Activated CD4-positive, alpha-beta memory T cell treated with anti-CD3 and anti-CD28 coated beads for 36 hours (primary cell): ENCODE measurements at regions of chr3 and their contacts with region 1.

Region 1: GRCh38 chr3:88203642-88204055 is 53.9 kb downstream of the C3orf38 start:
- DNase-seq: peak; percentile 72
- H3K4me3 Mint-ChIP-seq: no peak overlapping the region
- H3K27ac Mint-ChIP-seq: no peak overlapping the region
- H3K4me1 Mint-ChIP-seq: no peaks in the 10 kb centered on the region
- H3K27me3 Mint-ChIP-seq: no peaks in the 10 kb centered on the region

Region 2: DNA sequence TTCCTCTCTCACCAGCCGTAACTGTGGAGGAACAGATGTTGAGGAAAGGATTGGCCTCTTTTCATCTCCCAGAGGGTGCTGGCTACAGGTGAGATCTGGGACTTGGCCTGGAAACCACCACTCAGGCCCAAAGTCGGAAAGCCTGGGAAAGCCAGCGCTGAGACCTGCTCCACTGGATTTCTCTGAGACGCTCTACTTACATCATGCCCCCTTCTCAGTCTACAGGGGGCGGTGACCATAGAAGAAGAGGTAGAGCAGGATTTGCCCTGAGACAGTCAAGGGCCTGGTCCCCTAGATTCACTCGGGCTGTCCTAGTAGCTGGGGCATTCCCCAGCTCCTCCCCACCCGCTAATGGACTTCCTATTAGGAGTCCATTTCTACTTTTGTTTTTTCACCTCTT is 27.0 kb after region 1 on chr3:
- CTCF ChIA-PET with region 1: no interaction called
- POLR2A ChIA-PET with region 1: no interaction called
- intact Hi-C with region 1: no loop called
- DNase-seq: no peak
- H3K4me3 Mint-ChIP-seq: no peak overlapping the region
- H3K27ac Mint-ChIP-seq: no peak overlapping the region
- H3K4me1 Mint-ChIP-seq: no peaks in the 10 kb centered on the region
- H3K27me3 Mint-ChIP-seq: no peaks in the 10 kb centered on the region

Region 3: GRCh38 chr3:89098964-89099585 is 895.4 kb after region 1 on chr3:
- CTCF ChIA-PET with region 1: no interaction called
- POLR2A ChIA-PET with region 1: no interaction called
- intact Hi-C with region 1: loop called (anchors 1 kb)
- DNase-seq: peak; percentile 42
- H3K4me3 Mint-ChIP-seq: no peak overlapping the region
- H3K27ac Mint-ChIP-seq: no peak overlapping the region
- H3K4me1 Mint-ChIP-seq: no peaks in the 10 kb centered on the region
- H3K27me3 Mint-ChIP-seq: no peaks in the 10 kb centered on the region

Region 4: DNA sequence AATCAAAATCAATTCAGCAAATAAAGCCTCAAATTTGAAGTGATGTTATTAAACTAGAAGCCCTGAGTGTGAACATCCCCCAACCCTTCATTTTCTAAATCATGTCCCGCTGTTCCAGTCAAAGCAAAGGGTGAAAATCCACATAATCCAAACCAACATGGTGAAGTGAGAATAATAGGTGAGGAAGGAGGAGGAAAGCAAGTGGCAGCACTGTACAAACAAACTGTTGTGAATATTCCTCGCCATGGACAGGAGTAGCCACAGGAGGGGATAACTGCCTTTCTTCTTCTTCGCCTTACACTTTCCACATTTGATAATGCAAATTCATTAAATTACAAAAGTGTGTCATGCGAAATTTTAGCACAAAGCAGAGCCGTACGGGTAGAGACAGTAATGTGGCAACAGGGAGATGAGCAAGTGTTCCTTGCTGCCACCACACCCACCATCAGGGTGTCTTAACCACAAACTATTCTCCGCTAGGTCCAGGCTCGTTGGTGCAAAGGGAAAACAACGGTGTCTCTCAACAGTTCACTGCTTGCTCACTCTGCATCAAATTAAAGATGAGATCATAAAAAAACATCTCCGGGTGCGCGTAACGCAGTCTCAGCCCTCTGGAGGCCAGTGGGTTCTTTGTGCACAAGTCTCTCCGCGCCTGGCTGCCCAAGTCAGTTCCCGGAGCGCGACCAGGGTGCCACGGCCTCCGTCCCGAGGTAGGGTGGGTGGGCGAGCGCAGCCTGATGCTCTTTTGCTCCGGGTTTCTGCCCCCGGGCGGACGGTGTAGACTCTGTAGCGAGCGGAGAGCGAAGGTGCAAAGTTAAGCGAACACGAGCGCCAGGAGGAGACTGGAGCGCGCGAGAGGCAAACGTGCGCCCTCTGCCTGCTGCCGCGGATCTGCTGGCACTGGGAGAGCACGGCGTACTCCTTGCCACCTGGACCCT is 910.5 kb after region 1 on chr3:
- CTCF ChIA-PET with region 1: interaction called, 3 read pairs
- POLR2A ChIA-PET with region 1: no interaction called
- intact Hi-C with region 1: loop called (anchors 2 kb)
- DNase-seq: peak; percentile 49
- H3K4me3 Mint-ChIP-seq: peak overlapping the region; percentile 57
- H3K27ac Mint-ChIP-seq: no peak overlapping the region
- H3K4me1 Mint-ChIP-seq: peaks cover 7% of the 10 kb centered on the region
- H3K27me3 Mint-ChIP-seq: peaks cover 7% of the 10 kb centered on the region

Region 5: DNA sequence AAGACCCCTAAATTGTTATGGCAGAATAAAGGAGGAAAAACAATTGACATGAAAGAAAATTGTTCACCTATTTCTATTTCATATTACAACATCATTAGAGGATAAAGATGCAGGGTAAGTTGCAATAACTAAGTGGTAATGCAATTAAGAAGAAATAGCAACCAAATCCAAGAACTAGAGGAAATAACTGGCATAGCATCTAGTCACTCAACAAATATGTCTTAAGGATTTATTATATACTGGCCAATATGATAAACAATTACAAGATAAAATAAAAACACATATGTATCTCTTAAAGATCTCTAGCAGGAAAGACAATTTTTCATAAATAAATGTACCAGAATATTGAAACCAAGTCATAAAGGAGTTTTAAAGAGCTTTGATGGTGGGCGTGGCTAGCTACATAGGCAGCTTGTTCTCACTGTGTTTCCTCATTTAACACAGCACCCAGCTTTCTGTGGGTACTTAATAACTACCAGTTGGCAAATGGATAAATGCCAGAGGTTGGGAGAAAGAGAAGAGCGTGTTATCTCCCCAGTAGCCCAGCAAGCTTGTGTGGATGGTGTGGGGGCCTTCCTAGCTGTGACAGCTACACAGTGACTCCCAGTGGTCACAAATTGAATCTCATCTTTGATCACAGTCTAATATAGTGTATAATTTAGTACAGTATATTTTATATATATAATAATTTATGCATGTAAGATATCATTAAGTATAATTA is 1887.7 kb after region 1 on chr3:
- CTCF ChIA-PET with region 1: no interaction called
- POLR2A ChIA-PET with region 1: no interaction called
- intact Hi-C with region 1: loop called (anchors 2 kb)
- DNase-seq: no peak
- H3K4me3 Mint-ChIP-seq: no peak overlapping the region
- H3K27ac Mint-ChIP-seq: no peak overlapping the region
- H3K4me1 Mint-ChIP-seq: no peaks in the 10 kb centered on the region
- H3K27me3 Mint-ChIP-seq: no peaks in the 10 kb centered on the region

Region 6: DNA sequence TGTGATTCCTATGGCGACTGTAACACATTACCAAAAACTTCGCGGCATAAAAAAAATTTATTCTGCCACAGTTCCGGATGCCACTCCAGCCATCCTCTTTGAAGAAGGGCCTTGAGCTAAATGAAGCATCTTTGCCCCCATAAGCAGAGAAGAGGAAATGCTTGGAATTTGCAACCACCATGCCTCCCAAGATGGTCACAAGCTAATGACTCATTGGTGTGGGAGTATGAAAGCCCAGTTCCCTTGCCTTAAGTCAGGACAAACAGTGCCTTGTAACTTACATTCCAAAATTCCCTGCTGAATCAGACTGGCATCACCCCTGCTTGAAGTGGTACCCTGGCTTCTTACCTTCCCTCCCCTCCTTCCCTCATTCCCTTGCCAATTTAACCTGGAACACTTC is 1981.2 kb after region 1 on chr3:
- CTCF ChIA-PET with region 1: interaction called, 3 read pairs
- POLR2A ChIA-PET with region 1: no interaction called
- intact Hi-C with region 1: loop called (anchors 10 kb)
- DNase-seq: no peak
- H3K4me3 Mint-ChIP-seq: no peak overlapping the region
- H3K27ac Mint-ChIP-seq: no peak overlapping the region
- H3K4me1 Mint-ChIP-seq: no peaks in the 10 kb centered on the region
- H3K27me3 Mint-ChIP-seq: no peaks in the 10 kb centered on the region